ENCODE measurements at regions of chr22 and their contacts with region 1.

Region 1: DNA sequence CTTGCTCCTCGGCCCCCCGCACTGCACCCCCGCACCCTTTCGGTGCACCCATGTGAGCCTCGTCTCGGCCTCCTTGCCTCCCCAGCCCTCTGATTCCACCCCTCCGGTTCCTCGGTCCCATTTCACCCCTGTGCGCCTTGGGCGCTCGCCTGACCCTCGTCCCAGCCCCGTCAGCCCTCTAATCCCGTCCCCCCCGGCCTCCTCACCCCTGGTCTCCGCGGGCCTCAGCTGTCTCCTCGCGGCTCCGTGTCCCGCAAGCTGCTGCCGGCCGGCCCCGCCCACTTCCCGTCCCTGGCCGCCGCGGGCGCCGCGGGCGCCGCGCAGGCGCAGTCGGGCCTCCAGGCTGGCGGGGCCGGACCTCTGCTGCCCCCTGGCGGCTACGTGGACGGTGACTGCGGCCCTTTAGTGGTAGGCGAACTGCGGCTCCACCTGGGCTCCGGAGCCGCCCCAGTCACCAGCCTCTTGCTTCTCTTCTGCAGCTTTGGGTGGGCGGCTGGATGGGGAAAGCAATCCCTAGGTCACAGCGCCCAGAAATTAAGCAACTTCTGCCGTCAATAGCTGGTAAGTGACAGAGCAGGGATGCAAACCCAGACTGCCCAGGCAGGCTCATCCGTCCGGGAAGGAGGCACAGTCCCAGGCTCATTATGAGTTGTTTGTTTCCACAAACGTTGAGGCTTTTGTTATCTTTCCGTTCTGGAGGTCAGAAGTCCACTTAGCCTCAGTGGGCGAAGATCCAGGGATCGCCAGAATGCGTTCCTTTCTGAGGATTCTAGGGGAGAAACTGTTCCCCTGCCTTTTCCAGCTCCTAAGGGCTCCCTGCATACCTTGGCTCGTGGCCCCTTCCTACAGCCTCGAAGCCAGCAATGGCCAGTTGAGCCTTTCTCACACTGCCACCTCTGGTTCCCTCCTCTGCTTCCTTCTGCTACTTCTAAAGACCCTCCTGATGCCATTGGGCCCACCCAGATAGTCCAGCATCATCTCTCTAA is at the start of gene PPM1F:
- DNase-seq: peak; percentile 68 to 82 (median 81)
- H3K4me3 ChIP-seq: peak within 1 kb of the TSS; percentile 65 to 82 (median 79)
- H3K4me3 Mint-ChIP-seq: peak within 1 kb of the TSS; percentile 90 to 92
- H3K27ac ChIP-seq: peak within 1 kb of the TSS; percentile 30 to 93
- H3K27ac Mint-ChIP-seq: peak within 1 kb of the TSS; percentile 81 to 95 (median 89)
- H3K4me1 ChIP-seq: peaks cover 43 to 53% of the 10 kb centered on the region in 2 donors
- H3K4me1 Mint-ChIP-seq: peaks cover 39% of the 10 kb centered on the region
- H3K27me3 ChIP-seq: no peaks in the 10 kb centered on the region
- H3K27me3 Mint-ChIP-seq: peaks cover 0 to 7% (median 3%) of the 10 kb centered on the region in 3 donors
- CTCF ChIP-seq: peak; percentile 76
- polyA plus RNA-seq, gene PPM1F: 28.8 to 95.0 (median 37.2) TPM

Region 2: GRCh38 chr22:21712894-21713712 is 239.8 kb before region 1 on chr22:
- intact Hi-C with region 1: loop called (anchors 2 kb)
- DNase-seq: peak; percentile 36 to 54 (median 48)
- H3K4me3 ChIP-seq: no peak overlapping the region
- H3K4me3 Mint-ChIP-seq: no peak overlapping the region
- H3K27ac ChIP-seq: no peak overlapping the region
- H3K27ac Mint-ChIP-seq: peak overlapping the region in 2 of 7 donors; percentile 16 to 73
- H3K4me1 ChIP-seq: peaks cover 0 to 7% of the 10 kb centered on the region in 2 donors
- H3K4me1 Mint-ChIP-seq: peaks cover 14% of the 10 kb centered on the region
- H3K27me3 ChIP-seq: no peaks in the 10 kb centered on the region
- H3K27me3 Mint-ChIP-seq: peaks cover 0 to 2% (median 0%) of the 10 kb centered on the region in 3 donors
- CTCF ChIP-seq: peak; percentile 73

Region 3: GRCh38 chr22:21816787-21817496 is 135.9 kb before region 1 on chr22:
- intact Hi-C with region 1: loop called in 1 of 2 experiments (anchors 5 kb)
- DNase-seq: peak; percentile 91 to 98 (median 96)
- H3K4me3 ChIP-seq: peak overlapping the region; percentile 24 to 70 (median 33)
- H3K4me3 Mint-ChIP-seq: peak overlapping the region; percentile 75 to 82
- H3K27ac ChIP-seq: peak overlapping the region; percentile 98
- H3K27ac Mint-ChIP-seq: peak overlapping the region; percentile 94 to 100 (median 100)
- H3K4me1 ChIP-seq: peaks cover 55 to 59% of the 10 kb centered on the region in 2 donors
- H3K4me1 Mint-ChIP-seq: peaks cover 62% of the 10 kb centered on the region
- H3K27me3 ChIP-seq: no peaks in the 10 kb centered on the region
- H3K27me3 Mint-ChIP-seq: no peaks in the 10 kb centered on the region
- CTCF ChIP-seq: no peak

Region 4: GRCh38 chr22:21867528-21868266 is 85.2 kb before region 1 on chr22 and contains the start of gene MAPK1:
- intact Hi-C with region 1: loop called in 1 of 2 experiments (anchors 5 kb)
- DNase-seq: peak; percentile 79 to 84 (median 82)
- H3K4me3 ChIP-seq: peak within 1 kb of the TSS; percentile 88 to 99 (median 90)
- H3K4me3 Mint-ChIP-seq: peak within 1 kb of the TSS; percentile 94 to 97
- H3K27ac ChIP-seq: peak within 1 kb of the TSS; percentile 83 to 86
- H3K27ac Mint-ChIP-seq: peak within 1 kb of the TSS; percentile 89 to 98 (median 95)
- H3K4me1 ChIP-seq: peaks cover 36 to 48% of the 10 kb centered on the region in 2 donors
- H3K4me1 Mint-ChIP-seq: peaks cover 44% of the 10 kb centered on the region
- H3K27me3 ChIP-seq: no peaks in the 10 kb centered on the region
- H3K27me3 Mint-ChIP-seq: peaks cover 0 to 2% (median 2%) of the 10 kb centered on the region in 3 donors
- CTCF ChIP-seq: peak; percentile 33
- polyA plus RNA-seq, gene MAPK1: 47.0 to 148 (median 118) TPM

Measured in CD14-positive monocyte (primary cell).